ENCODE measurements at regions of chr15 and their contacts with region 1.

Region 1: GRCh38 chr15:90886041-90886614 is 1.8 kb downstream of the FES start:
- DNase-seq: no peak
- H3K4me3 ChIP-seq: no peak overlapping the region
- CTCF ChIP-seq: peak; percentile 95

Region 2: DNA sequence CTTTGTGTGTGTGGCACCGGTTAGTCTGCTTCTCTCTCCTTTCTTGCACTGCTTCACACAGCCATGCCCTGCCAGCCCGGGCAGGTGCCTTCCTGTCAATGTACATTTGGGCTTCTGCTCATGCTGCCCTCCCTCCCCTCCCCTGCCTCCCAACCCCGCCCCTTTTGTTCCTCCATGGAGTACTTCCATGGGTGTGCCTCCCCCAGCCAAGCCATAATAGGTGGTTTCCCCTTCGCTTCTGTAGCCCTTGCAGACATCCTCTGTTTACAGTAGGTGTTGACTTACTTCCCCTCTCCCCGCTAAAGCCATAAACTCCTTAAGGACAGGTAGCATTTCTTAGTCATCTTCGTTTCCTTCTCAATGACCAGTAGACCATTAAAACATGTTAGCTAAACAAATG is 388.2 kb before region 1 on chr15:
- CTCF ChIA-PET with region 1: interaction called, 15 read pairs
- POLR2A ChIA-PET with region 1: no interaction called
- DNase-seq: no peak
- H3K4me3 ChIP-seq: no peak overlapping the region
- CTCF ChIP-seq: no peak

Region 3: DNA sequence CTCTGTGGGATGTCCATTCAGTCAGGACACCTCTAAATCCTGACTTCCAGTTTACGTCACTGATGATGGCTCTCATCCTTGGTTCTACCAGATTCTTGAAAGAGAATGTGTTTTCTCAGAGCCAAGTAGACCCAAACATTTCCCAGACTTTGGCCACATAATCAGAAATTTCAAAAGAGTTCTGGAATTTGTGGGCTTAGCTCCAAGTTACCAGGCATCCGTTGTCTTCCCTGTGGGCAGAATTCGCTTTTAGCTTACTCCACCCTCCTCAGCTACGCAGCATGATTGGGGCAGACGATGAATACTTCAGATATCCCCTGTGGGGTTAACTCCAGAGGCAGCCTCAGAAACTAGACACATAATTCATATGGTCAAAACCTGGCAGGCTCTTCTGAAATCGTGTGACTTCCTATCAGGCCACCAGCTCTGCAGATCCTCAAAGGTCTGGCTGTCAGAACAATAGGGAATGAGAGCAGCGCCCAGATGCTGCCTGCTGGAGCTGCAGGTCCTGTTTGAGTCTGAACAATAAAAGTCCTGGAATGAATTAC is 325.8 kb before region 1 on chr15:
- CTCF ChIA-PET with region 1: interaction called, 13 read pairs
- POLR2A ChIA-PET with region 1: no interaction called
- DNase-seq: peak; percentile 94
- H3K4me3 ChIP-seq: no peak overlapping the region
- CTCF ChIP-seq: no peak

Region 4: DNA sequence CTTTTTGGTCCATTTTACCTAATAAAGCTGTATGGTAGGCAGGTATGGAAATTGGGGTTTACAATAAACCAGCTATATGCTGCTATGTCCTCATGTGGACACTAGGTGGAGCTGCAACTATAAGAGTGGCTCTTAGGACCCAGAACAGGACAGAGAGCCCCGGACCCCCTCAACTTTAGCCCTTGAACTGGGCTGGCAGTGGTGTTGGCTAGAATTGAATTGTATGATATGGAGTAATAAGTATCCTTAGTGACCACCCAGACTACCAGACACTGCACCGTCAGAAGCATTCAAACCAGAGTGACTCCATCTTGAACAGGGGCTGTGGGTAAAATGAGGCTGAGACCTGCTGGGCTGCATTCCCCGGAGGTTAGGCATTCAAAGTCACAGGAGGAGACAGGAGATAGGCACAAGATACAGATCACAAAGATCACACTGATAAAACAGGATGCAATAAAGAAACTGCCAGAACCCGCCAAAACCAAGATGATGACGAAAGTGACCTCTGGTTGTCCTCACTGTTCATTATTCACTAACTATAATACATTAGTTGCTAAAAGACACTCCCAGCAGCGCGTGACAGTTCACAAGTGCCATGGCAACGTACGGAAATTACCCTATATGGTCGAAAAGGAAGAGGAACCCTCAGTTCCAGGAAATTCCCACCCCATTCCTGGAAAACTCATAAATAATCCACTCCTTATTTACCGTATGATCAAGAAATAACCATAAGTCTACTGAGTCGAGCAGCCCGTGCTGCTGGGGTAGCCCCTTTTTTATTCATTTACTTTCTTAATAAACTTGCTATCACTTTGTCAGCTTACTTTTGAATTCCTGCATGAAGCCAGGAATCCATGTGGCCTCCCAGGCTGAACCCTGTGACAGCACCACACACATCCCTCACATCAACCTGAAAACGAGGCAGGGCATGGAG is 237.7 kb before region 1 on chr15:
- CTCF ChIA-PET with region 1: interaction called, 204 read pairs
- POLR2A ChIA-PET with region 1: no interaction called
- DNase-seq: no peak
- H3K4me3 ChIP-seq: no peak overlapping the region
- CTCF ChIP-seq: peak; percentile 78

Region 5: GRCh38 chr15:90701880-90702630 is 184.1 kb before region 1 on chr15:
- CTCF ChIA-PET with region 1: interaction called, 12 read pairs
- POLR2A ChIA-PET with region 1: no interaction called
- DNase-seq: no peak
- H3K4me3 ChIP-seq: no peak overlapping the region
- CTCF ChIP-seq: no peak

Region 6: DNA sequence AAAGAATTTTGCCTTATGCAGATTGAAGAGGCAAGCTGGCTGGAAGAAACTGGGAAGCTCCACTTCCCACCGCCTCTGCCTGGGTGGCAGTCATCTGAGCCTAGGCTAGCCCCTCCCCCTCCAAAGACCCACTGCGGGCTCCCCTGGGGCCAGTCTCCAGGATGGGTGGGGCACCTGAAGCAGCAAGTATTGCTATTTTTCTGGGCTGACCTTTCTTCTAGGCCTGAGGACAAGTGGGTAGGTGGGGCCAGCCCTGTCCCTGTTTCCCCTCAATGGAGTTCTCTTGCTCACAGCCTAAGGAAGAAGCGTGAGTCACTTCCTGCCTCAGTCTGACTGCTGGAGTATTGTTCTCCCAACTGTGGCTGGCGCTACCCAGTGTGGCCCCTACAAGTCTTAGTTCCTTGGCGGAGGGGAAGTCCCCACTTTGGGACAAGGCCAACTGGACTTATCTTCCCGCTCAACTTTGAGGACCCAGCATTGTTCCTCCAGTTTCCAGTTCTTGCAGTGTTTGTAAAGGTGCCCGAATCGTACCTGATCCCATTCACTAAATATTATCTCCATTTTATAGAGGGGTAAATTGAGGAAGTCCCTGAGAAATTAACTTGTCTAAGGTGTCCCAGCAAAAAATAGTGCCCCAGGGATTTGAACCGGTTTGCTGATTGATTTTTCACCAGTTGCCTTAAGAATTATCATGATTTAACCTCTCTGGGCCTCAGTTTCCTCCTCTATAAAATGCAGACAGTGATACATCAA is 16.4 kb before region 1 on chr15:
- CTCF ChIA-PET with region 1: interaction called, 38 read pairs
- POLR2A ChIA-PET with region 1: interaction called, 3 read pairs
- DNase-seq: no peak
- H3K4me3 ChIP-seq: no peak overlapping the region; the same call in 1 of the 2 replicates
- CTCF ChIP-seq: no peak

Region 7: GRCh38 chr15:90902040-90902839 is 16.1 kb after region 1 on chr15:
- CTCF ChIA-PET with region 1: interaction called, 109 read pairs
- POLR2A ChIA-PET with region 1: no interaction called
- DNase-seq: peak; percentile 21
- H3K4me3 ChIP-seq: peak overlapping the region; percentile 76
- CTCF ChIP-seq: peak; percentile 82